ENCODE measurements at regions of chr7 and their contacts with region 1.

Region 1: DNA sequence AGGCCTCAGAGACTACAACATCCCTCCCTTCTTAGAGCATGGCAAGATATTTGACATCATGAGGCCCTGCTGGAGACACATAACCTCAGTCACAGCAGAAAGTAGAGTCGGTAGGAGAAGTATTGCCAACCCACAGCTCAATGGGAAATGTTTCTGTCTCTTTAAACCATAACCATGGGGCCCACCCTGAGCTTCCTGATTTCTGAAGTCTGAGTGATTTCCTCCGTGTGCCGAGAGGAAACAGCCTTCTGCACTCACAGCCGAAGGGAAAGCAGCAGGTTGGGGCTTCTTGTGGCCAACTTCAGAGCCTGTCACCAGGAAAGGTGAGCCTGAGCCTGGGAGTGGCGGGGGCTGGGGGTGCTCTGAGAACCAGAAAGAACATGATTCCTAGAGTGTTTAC is at the start of gene GIMAP1:
- DNase-seq: peak; percentile 69
- H3K4me3 Mint-ChIP-seq: peak within 1 kb of the TSS; percentile 97
- H3K27ac Mint-ChIP-seq: peak within 1 kb of the TSS; percentile 79
- H3K4me1 Mint-ChIP-seq: peaks cover 62% of the 10 kb centered on the region
- H3K27me3 Mint-ChIP-seq: no peaks in the 10 kb centered on the region
- total RNA-seq, gene GIMAP1: 18.8 to 21.0 TPM

Region 2: GRCh38 chr7:150631866-150632864 is 84.2 kb before region 1 on chr7 and contains the start of gene GIMAP6:
- CTCF ChIA-PET with region 1: no interaction called
- POLR2A ChIA-PET with region 1: interaction called, 27 read pairs
- DNase-seq: peak; percentile 56
- H3K4me3 Mint-ChIP-seq: peak within 1 kb of the TSS; percentile 98
- H3K27ac Mint-ChIP-seq: peak within 1 kb of the TSS; percentile 89
- H3K4me1 Mint-ChIP-seq: peaks cover 68% of the 10 kb centered on the region
- H3K27me3 Mint-ChIP-seq: no peaks in the 10 kb centered on the region
- total RNA-seq, gene GIMAP6: 84.9 to 85.9 TPM

Region 3: GRCh38 chr7:150685219-150686029 is 30.9 kb before region 1 on chr7 and contains the start of gene GIMAP2:
- CTCF ChIA-PET with region 1: interaction called, 7 read pairs
- POLR2A ChIA-PET with region 1: interaction called, 29 read pairs
- DNase-seq: peak; percentile 33
- H3K4me3 Mint-ChIP-seq: peak within 1 kb of the TSS; percentile 100
- H3K27ac Mint-ChIP-seq: peak within 1 kb of the TSS; percentile 98
- H3K4me1 Mint-ChIP-seq: peaks cover 76% of the 10 kb centered on the region
- H3K27me3 Mint-ChIP-seq: no peaks in the 10 kb centered on the region
- total RNA-seq, gene GIMAP2: 113 to 120 TPM

Region 4: DNA sequence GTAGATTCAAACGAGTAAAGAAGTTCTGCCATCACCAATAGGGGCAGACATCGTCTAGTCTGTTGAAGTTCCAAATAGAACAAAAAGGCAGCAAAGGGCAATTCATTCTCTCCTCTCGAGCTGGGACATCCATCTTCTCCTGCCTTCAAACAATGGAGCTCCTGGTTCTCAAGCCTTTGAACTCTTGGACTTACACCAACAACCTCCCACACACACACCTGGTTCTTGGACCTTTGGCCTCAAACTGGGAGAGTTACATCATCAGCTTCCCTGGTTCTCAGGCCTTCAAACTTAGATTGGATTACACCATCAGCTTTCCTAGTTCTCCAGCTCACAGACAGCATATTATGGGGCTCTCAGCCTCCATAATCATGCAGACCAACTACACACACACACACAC is 11.0 kb after region 1 on chr7:
- CTCF ChIA-PET with region 1: interaction called, 44 read pairs
- POLR2A ChIA-PET with region 1: interaction called, 60 read pairs
- DNase-seq: no peak
- H3K4me3 Mint-ChIP-seq: no peak overlapping the region
- H3K27ac Mint-ChIP-seq: no peak overlapping the region
- H3K4me1 Mint-ChIP-seq: peaks cover 40% of the 10 kb centered on the region
- H3K27me3 Mint-ChIP-seq: no peaks in the 10 kb centered on the region

Region 5: DNA sequence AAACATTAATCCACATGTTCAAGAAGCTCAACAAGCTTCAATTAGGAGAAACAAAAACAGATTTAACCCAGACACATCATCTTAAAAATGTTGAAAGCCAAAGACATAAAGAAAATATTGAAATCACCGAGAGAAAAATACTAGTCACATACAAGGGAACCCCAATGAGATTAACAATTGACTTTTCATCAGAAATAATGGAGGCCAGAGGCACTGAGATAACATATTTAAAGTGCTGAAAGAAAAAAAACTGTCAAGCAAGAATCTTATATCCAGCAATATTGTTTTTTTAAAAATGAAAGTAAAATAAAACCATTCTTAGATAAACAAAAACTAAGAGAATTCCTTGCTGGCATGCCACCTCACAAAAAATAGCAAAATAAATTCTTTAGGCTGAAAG is 164.8 kb after region 1 on chr7:
- CTCF ChIA-PET with region 1: no interaction called
- POLR2A ChIA-PET with region 1: no interaction called
- DNase-seq: no peak
- H3K4me3 Mint-ChIP-seq: no peak overlapping the region
- H3K27ac Mint-ChIP-seq: no peak overlapping the region
- H3K4me1 Mint-ChIP-seq: peaks cover 3% of the 10 kb centered on the region
- H3K27me3 Mint-ChIP-seq: peaks cover 55% of the 10 kb centered on the region

Measured in activated CD4-positive, alpha-beta memory T cell treated with anti-CD3 and anti-CD28 coated beads, Interleukin-2, amount 10 ng/mL, durations not matched to agents 7 days and 5 days (primary cell).